ENCODE measurements at regions of chr22 and their contacts with region 1.

Region 1: GRCh38 chr22:20418211-20418788 is 19.3 kb downstream of the SCARF2 start:
- DNase-seq: peak; percentile 53 to 78 (median 68)
- ATAC-seq: peak; percentile 92
- H3K4me3 ChIP-seq: peak overlapping the region; percentile 56
- H3K4me3 Mint-ChIP-seq: peak overlapping the region in 9 of 10 donors; percentile 20 to 77 (median 57)
- H3K27ac ChIP-seq: no peak overlapping the region
- H3K27ac Mint-ChIP-seq: peak overlapping the region in 1 of 9 donors; percentile 43
- H3K4me1 ChIP-seq: peaks cover 0 to 6% of the 10 kb centered on the region in 2 donors
- H3K4me1 Mint-ChIP-seq: peaks cover 0 to 8% (median 0%) of the 10 kb centered on the region in 7 donors
- H3K27me3 ChIP-seq: no peaks in the 10 kb centered on the region
- H3K27me3 Mint-ChIP-seq: peaks cover 0 to 22% (median 0%) of the 10 kb centered on the region in 5 donors

Region 2: DNA sequence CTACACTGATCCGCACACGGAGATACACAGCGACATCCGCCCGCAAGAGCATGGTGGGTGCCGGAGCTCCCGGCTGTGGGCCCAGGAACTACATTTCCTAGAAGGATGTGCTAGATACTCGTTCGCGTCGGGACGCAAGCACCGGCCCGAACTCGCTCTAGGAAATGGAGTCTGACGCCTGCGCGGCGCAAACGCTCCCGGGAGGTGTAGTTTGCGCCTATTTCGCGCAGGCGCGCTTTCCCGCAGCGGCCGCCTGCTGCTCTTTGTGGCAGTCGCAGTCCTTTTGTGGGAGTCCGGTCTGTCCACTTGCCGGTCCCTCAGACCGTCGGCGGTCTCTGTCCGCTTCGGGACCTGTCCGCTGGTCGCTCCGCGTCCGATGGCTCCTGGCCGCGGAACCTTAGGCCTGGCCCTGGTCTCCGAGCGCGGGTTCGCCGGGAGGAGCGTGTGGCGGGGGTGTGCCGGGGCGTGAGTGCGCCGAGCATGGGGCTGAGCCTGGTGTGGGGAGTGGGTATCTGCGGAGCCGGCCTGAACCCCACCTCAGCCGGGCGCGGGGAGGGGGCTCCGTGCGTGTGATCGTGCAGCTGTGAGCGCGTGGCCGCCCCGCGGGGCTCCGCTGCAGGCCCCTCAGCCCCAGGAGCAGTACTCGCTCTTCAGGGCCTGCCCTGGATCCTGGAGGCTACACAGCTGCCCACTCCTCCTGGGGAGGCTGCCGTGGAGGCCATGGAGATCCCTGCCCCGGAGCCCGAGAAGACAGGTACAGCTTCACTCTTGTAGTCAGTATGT is 24.2 kb before region 1 on chr22 and contains the start of gene ZNF74:
- CTCF ChIA-PET with region 1: no interaction called
- POLR2A ChIA-PET with region 1: no interaction called
- intact Hi-C with region 1: no loop called
- DNase-seq: peak; percentile 69 to 90 (median 86)
- ATAC-seq: peak; percentile 98
- H3K4me3 ChIP-seq: peak within 1 kb of the TSS; percentile 71
- H3K4me3 Mint-ChIP-seq: peak within 1 kb of the TSS; percentile 83 to 93 (median 91)
- H3K27ac ChIP-seq: peak within 1 kb of the TSS; percentile 73
- H3K27ac Mint-ChIP-seq: peak within 1 kb of the TSS; percentile 86 to 98 (median 92)
- H3K4me1 ChIP-seq: peaks cover 14 to 17% of the 10 kb centered on the region in 2 donors
- H3K4me1 Mint-ChIP-seq: peaks cover 23 to 52% (median 45%) of the 10 kb centered on the region in 7 donors
- H3K27me3 ChIP-seq: no peaks in the 10 kb centered on the region
- H3K27me3 Mint-ChIP-seq: no peaks in the 10 kb centered on the region
- total RNA-seq, gene ZNF74: 6.1 to 18.2 (median 12.9) TPM

Region 3: GRCh38 chr22:20429254-20430100 is 11.2 kb after region 1 on chr22:
- CTCF ChIA-PET with region 1: interaction called, 6 read pairs
- POLR2A ChIA-PET with region 1: no interaction called
- intact Hi-C with region 1: loop called in 1 of 2 experiments (anchors 1 kb)
- DNase-seq: peak; percentile 56 to 86 (median 75)
- ATAC-seq: peak; percentile 87
- H3K4me3 ChIP-seq: peak overlapping the region; percentile 79
- H3K4me3 Mint-ChIP-seq: peak overlapping the region; percentile 82 to 96 (median 86)
- H3K27ac ChIP-seq: no peak overlapping the region
- H3K27ac Mint-ChIP-seq: peak overlapping the region; percentile 11 to 80 (median 62)
- H3K4me1 ChIP-seq: peaks cover 17 to 26% of the 10 kb centered on the region in 2 donors
- H3K4me1 Mint-ChIP-seq: peaks cover 6 to 22% (median 13%) of the 10 kb centered on the region in 7 donors
- H3K27me3 ChIP-seq: peaks cover 0 to 12% of the 10 kb centered on the region in 2 donors
- H3K27me3 Mint-ChIP-seq: peaks cover 18 to 66% (median 22%) of the 10 kb centered on the region in 5 donors

Region 4: GRCh38 chr22:20495861-20496681 is 77.8 kb after region 1 on chr22:
- CTCF ChIA-PET with region 1: interaction called, 6 read pairs
- POLR2A ChIA-PET with region 1: interaction called, 3 read pairs
- intact Hi-C with region 1: loop called (anchors 1 kb)
- DNase-seq: peak; percentile 82 to 97 (median 87)
- ATAC-seq: peak; percentile 98
- H3K4me3 ChIP-seq: peak overlapping the region; percentile 100
- H3K4me3 Mint-ChIP-seq: peak overlapping the region; percentile 88 to 98 (median 94)
- H3K27ac ChIP-seq: peak overlapping the region; percentile 85
- H3K27ac Mint-ChIP-seq: peak overlapping the region; percentile 89 to 95 (median 93)
- H3K4me1 ChIP-seq: peaks cover 7 to 41% of the 10 kb centered on the region in 2 donors
- H3K4me1 Mint-ChIP-seq: peaks cover 28 to 55% (median 49%) of the 10 kb centered on the region in 7 donors
- H3K27me3 ChIP-seq: no peaks in the 10 kb centered on the region
- H3K27me3 Mint-ChIP-seq: no peaks in the 10 kb centered on the region

Region 5: DNA sequence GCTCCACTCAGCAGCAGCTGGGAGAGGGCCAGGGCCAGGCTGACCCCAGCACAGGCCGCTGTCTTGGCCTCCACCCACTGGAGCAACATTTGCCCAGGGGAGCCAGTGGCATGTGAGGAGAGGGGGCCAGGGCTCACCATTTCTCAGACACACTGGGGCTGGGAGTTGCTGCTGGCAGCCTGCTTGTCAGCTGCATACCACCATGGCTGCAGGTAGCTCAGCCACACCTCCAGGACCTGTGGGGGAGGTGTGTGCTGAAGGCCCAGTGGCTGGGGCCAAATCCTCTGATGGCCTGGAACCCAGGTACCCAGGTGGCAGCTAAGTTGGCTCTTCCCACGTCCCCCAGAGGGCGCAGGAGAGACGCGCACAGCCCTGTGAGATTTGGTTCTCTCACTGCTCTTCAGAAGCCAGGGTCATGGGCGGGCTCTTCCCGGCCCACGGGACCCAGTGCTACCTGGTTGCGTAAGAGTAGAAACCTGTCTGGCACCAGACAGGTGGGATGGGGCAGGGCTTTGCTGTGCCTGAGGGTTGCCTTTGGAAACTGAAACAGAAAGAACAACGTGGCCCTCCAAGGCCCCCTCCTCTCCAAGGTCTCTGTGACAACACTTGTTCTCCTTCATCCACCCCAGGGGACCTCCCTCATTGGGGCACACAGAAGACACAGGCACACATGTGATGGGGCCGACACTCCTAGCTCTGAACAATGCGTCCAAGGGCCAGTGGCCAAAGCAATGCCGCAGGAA is 187.9 kb after region 1 on chr22:
- CTCF ChIA-PET with region 1: interaction called, 3 read pairs
- POLR2A ChIA-PET with region 1: interaction called, 4 read pairs
- intact Hi-C with region 1: loop called in 1 of 2 experiments (anchors 1 kb)
- DNase-seq: peak; percentile 47 to 74 (median 71)
- ATAC-seq: peak; percentile 90
- H3K4me3 ChIP-seq: no peak overlapping the region
- H3K4me3 Mint-ChIP-seq: peak overlapping the region in 5 of 10 donors; percentile 17 to 69 (median 42)
- H3K27ac ChIP-seq: no peak overlapping the region
- H3K27ac Mint-ChIP-seq: peak overlapping the region in 4 of 9 donors; percentile 22 to 76 (median 29)
- H3K4me1 ChIP-seq: peaks cover 5 to 10% of the 10 kb centered on the region in 2 donors
- H3K4me1 Mint-ChIP-seq: peaks cover 3 to 25% (median 17%) of the 10 kb centered on the region in 7 donors
- H3K27me3 ChIP-seq: no peaks in the 10 kb centered on the region
- H3K27me3 Mint-ChIP-seq: peaks cover 0 to 2% (median 0%) of the 10 kb centered on the region in 5 donors

Region 6: DNA sequence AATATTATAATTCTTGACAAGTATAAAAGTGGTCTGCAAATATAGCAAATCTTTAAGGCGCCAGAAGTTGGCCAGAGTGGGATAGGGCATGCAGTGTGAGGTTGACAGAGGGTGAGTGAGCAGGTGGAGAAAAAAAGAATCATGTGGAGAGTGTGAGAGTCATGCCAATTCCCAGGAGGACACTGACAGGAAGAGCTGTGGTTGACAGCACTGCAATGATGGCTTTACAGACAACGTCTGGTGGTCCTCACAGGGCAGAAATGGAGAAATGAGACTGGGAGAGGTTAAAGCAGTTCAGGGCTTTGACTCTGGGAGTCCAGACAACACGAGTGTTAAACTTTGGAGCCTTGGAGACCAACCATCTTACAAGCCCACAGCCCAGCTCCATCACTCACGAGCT is 390.5 kb after region 1 on chr22:
- CTCF ChIA-PET with region 1: interaction called, 10 read pairs
- POLR2A ChIA-PET with region 1: no interaction called
- intact Hi-C with region 1: no loop called
- DNase-seq: no peak
- ATAC-seq: no peak
- H3K4me3 ChIP-seq: no peak overlapping the region
- H3K4me3 Mint-ChIP-seq: peak overlapping the region in 1 of 10 donors; percentile 20
- H3K27ac ChIP-seq: no peak overlapping the region
- H3K27ac Mint-ChIP-seq: peak overlapping the region in 4 of 9 donors; percentile 6 to 82 (median 46)
- H3K4me1 ChIP-seq: peaks cover 0 to 6% of the 10 kb centered on the region in 2 donors
- H3K4me1 Mint-ChIP-seq: peaks cover 0 to 19% (median 11%) of the 10 kb centered on the region in 7 donors
- H3K27me3 ChIP-seq: no peaks in the 10 kb centered on the region
- H3K27me3 Mint-ChIP-seq: no peaks in the 10 kb centered on the region